ENCODE measurements at regions of chr12 and their contacts with region 1.

Region 1: GRCh38 chr12:106303957-106304421 is 1.5 kb downstream of the TCP11L2 start:
- DNase-seq: no peak
- H3K4me3 ChIP-seq: peak overlapping the region; percentile 89
- H3K27me3 ChIP-seq: no peaks in the 10 kb centered on the region
- CTCF ChIP-seq: no peak

Region 2: DNA sequence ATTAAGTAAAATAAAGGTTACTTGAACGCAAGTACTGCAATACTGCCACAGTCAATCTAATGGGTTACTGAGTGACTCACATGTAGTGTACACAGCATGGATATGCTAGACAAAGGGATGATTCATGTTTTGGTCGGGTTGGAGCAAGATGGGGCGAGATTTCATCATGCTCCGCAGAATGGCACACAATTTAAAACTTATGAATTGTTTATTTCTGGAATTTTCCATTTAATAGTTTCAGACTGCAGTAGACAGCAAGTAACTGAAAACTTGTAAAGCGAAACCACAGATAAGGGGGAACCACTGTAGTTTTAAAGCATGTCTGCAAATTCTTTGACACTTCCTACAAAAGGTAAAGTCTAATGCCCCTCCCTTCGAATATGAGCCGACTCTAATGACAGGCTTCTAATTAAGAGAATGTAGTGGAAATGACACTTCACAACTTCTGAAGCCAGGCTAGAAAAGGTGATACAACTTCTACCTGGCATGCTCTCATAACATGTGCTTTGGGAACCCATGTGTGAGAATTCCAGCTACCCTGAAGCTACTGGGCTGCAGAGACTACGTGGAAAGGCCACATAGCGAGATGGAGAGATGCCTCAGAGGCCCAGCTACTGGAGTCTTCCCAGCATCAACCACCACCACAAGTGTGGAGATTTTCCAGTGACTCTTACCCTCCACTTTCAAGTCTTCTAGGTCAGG is 15.3 kb before region 1 on chr12:
- CTCF ChIA-PET with region 1: interaction called, 5 read pairs
- POLR2A ChIA-PET with region 1: interaction called, 17 read pairs
- DNase-seq: peak; percentile 85
- H3K4me3 ChIP-seq: no peak overlapping the region
- H3K27me3 ChIP-seq: peaks cover 2% of the 10 kb centered on the region
- CTCF ChIP-seq: no peak

Region 3: GRCh38 chr12:106364261-106364660 is 60.3 kb after region 1 on chr12:
- CTCF ChIA-PET with region 1: no interaction called
- POLR2A ChIA-PET with region 1: no interaction called
- DNase-seq: no peak
- H3K4me3 ChIP-seq: no peak overlapping the region
- H3K27me3 ChIP-seq: no peaks in the 10 kb centered on the region
- CTCF ChIP-seq: no peak

Measured in BJ (cell line).